ENCODE measurements at regions of chr1 and their contacts with region 1.

Region 1: DNA sequence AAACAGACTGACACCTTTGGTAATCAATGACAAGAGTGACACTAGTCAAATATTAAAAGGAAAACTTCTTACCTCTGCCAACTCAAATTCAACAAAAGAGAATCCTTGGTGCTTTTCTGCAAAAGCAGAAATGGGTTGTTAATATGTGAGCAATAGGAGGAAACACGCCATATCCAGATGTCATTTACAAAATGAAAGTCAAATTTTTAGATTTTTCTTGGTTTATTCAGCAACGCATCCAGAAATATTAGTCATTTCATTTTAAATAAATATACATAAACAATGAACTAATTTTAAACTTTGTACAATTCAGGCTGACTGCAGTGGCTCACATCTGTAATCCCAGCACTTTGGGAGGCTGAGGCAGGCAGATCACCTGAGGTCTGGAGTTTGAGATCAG is 22.3 kb downstream of the PABPC4 start:
- DNase-seq: no peak
- ATAC-seq: no peak
- H3K4me3 ChIP-seq: no peak overlapping the region
- H3K27ac ChIP-seq: no peak overlapping the region
- H3K4me1 ChIP-seq: peaks cover 0 to 1% of the 10 kb centered on the region in 2 experiments; a peak in 1 of 5 replicates
- H3K27me3 ChIP-seq: no peaks in the 10 kb centered on the region
- CTCF ChIP-seq: no peak
- EP300 ChIP-seq: no peak
- POLR2A ChIP-seq: no peak
- RAD21 ChIP-seq: no peak

Region 2: GRCh38 chr1:39485046-39485803 is 69.1 kb before region 1 on chr1:
- CTCF ChIA-PET with region 1: no interaction called
- POLR2A ChIA-PET with region 1: no interaction called
- in situ Hi-C with region 1: no loop called
- intact Hi-C with region 1: no loop called
- DNase-seq: no peak
- ATAC-seq: no peak
- H3K4me3 ChIP-seq: no peak overlapping the region
- H3K27ac ChIP-seq: no peak overlapping the region
- H3K4me1 ChIP-seq: peaks cover 0 to 3% of the 10 kb centered on the region in 2 experiments; a peak in 1 of 5 replicates
- H3K27me3 ChIP-seq: no peaks in the 10 kb centered on the region
- CTCF ChIP-seq: no peak
- EP300 ChIP-seq: no peak
- POLR2A ChIP-seq: no peak
- RAD21 ChIP-seq: no peak

Region 3: DNA sequence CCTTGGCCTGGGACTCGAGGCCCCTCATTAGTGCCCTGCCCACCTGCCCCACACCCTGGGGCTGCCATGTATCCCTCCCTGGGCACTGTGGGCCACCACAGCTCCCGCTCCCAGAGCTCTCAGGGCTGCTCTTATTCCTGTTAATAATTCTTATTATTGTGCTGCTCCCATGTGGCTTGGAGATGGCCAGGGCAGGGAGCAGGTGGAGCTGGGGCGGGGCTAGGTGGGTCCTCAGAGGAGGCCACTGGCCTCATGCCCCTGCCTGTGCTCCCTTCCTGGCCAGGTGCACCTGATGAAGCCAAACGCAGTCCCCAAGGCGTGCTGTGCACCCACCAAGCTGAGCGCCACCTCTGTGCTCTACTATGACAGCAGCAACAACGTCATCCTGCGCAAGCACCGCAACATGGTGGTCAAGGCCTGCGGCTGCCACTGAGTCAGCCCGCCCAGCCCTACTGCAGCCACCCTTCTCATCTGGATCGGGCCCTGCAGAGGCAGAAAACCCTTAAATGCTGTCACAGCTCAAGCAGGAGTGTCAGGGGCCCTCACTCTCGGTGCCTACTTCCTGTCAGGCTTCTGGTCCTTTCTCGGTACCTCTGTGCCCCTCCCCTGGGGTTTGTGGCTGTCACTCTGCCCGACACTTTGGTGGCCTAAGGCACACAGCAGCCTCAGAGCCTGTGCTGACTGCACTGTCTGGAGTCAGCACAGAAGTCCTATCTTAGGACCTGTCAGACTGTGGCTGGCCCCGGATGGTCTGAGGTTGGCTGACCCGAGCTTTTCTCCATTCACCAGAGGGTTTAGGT is 28.7 kb before region 1 on chr1:
- CTCF ChIA-PET with region 1: no interaction called
- POLR2A ChIA-PET with region 1: no interaction called
- in situ Hi-C with region 1: no loop called
- intact Hi-C with region 1: no loop called
- DNase-seq: peak in 1 of 4 experiments; percentile 6
- ATAC-seq: peak; percentile 27; the same call in 2 of the 3 replicates
- H3K4me3 ChIP-seq: no peak overlapping the region
- H3K27ac ChIP-seq: no peak overlapping the region
- H3K4me1 ChIP-seq: peaks cover 0 to 26% of the 10 kb centered on the region in 2 experiments; a peak in 3 of 5 replicates
- H3K27me3 ChIP-seq: no peaks in the 10 kb centered on the region
- CTCF ChIP-seq: no peak
- EP300 ChIP-seq: no peak
- POLR2A ChIP-seq: no peak
- RAD21 ChIP-seq: no peak

Region 4: GRCh38 chr1:39566441-39567137 is 12.3 kb after region 1 on chr1:
- CTCF ChIA-PET with region 1: no interaction called
- POLR2A ChIA-PET with region 1: interaction called, 15 read pairs
- in situ Hi-C with region 1: no loop called
- intact Hi-C with region 1: no loop called
- DNase-seq: no peak
- ATAC-seq: no peak
- H3K4me3 ChIP-seq: no peak overlapping the region
- H3K27ac ChIP-seq: no peak overlapping the region
- H3K4me1 ChIP-seq: peaks cover 0 to 5% of the 10 kb centered on the region in 2 experiments; a peak in 2 of 5 replicates
- H3K27me3 ChIP-seq: no peaks in the 10 kb centered on the region
- CTCF ChIP-seq: no peak
- EP300 ChIP-seq: no peak
- POLR2A ChIP-seq: no peak
- RAD21 ChIP-seq: no peak

Measured in K562 (cell line).